Activated CD4-positive, alpha-beta T cell treated with anti-CD3 and anti-CD28 coated beads, Interleukin-2, amount 10 ng/mL, durations not matched to agents 24 days and 14 days (primary cell): ENCODE measurements at regions of chr6 and their contacts with region 1.

Region 1: DNA sequence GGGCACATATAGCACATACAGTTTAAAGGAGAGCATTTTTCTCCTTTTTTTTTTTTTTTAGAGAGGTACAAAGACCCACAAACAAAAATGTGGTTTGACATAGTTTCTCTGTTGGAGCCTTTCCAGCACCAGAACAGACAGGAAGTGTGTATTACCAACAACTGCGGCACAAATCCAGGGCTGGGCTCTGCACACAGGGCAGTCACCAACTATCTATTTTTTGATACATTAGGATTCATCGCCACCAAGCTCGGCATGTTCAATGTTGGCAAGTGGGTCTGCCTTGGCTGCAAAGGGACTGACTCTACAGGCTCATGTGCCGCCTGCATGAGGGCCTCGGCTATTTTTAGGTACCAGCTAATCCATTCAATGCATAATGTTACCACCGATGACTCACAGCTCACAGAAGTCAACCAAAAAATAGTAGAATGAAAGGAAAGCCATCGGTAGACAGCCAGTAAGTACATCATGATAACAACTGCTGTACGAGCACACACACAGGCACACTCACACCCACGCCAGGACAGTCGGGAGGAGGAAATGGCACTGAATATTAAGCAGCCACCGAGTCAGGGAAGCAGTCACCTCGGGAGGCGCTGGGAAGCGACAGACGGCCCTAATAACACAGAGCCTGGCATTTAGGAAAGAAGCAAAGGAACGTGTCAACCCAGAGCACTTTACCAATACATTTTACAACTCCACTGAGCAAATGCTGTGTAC is 81.6 kb downstream of the GMPR start:
- DNase-seq: peak; percentile 90
- H3K4me3 Mint-ChIP-seq: peak overlapping the region; percentile 73
- H3K27ac Mint-ChIP-seq: peak overlapping the region; percentile 84
- H3K4me1 Mint-ChIP-seq: peaks cover 66% of the 10 kb centered on the region
- H3K27me3 Mint-ChIP-seq: no peaks in the 10 kb centered on the region

Region 2: DNA sequence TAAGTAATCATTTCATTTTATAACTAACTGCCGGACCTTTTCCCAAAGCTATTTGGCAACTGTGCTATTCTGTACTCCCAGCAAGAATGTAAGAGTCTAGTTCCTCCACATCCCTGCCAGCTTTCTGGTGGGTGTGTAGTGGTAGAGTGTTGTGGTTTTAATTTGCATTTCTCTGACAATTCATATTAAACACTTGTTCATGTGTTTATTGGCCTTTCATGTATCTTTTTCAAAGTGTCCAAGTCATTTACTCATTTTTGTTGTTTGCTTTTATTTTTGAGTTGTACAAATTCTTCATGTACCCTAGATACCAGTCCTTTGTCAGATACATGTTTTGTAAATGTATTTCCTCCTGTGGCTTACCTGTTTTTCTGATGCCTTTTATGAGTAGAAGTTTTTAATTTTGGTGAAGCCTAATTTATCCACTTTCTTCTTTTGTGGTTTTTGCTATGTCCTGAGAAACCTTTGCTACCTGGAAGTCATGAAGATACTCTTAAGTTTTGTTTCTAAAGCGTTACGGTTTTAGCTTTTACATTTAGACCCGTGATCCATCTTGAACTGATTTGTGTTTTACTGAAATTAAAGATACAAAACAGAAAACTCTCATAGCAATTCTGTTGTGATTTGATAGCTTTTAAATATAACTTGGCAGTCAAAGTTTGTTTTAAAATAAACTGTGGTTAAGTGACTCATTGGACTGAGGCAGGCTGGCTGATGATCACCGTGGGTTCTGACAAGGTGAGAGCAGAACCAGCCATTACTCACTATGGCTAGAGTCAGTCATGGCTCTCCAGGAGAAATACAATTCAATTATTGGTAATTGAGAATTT is 183.1 kb before region 1 on chr6:
- intact Hi-C with region 1: loop called (anchors 5 kb)
- DNase-seq: peak; percentile 71
- H3K4me3 Mint-ChIP-seq: peak overlapping the region; percentile 71
- H3K27ac Mint-ChIP-seq: peak overlapping the region; percentile 93
- H3K4me1 Mint-ChIP-seq: peaks cover 60% of the 10 kb centered on the region
- H3K27me3 Mint-ChIP-seq: no peaks in the 10 kb centered on the region

Region 3: DNA sequence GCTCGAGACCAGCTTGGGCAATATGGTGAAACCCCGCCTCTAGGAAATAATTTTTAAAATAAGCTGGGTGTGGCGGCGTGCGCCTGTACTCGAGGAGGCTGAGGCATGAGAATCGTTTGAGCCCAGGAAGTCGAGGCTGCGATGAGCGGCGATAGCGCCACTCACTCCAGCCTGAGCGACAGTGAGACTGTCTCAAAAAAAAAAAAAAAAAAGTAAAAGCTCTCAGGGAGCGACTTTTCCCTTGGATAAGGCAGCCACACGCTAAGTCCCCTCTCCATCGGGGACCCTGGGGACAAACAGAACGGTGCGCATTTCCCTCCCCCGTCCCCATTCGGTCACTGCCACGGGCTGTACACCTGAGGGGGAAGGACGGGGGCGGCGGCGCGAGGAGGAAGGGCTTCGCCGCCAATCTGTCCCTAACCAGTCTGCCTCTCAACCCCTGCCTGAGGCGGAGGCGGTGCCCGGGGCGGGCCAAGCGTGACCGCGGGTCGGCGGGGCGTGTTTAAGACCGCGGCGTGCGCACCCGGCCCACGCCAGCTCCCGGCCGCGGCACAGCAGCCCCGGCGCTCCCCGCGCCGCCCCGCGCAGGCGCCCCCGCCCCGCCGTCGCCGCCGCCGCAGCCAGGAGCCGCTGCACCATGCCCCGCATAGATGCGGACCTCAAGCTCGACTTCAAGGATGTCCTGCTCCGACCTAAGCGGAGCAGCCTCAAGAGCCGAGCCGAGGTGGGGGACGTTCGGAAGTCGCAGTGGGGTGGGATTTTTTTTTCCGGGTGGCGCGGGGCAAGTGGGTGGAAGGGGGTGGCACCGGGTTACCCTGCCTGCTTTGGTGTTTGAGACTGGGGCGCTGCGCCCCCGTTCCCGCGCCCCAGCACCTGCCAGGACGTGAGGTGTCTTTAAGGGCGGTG is 81.7 kb before region 1 on chr6 and contains the start of gene GMPR:
- intact Hi-C with region 1: loop called (anchors 5 kb)
- DNase-seq: peak; percentile 95
- H3K4me3 Mint-ChIP-seq: peak within 1 kb of the TSS; percentile 80
- H3K27ac Mint-ChIP-seq: peak within 1 kb of the TSS; percentile 20
- H3K4me1 Mint-ChIP-seq: peaks cover 26% of the 10 kb centered on the region
- H3K27me3 Mint-ChIP-seq: peaks cover 39% of the 10 kb centered on the region
- total RNA-seq, gene GMPR: 1.0 and 2.1 TPM in 2 replicates

Region 4: DNA sequence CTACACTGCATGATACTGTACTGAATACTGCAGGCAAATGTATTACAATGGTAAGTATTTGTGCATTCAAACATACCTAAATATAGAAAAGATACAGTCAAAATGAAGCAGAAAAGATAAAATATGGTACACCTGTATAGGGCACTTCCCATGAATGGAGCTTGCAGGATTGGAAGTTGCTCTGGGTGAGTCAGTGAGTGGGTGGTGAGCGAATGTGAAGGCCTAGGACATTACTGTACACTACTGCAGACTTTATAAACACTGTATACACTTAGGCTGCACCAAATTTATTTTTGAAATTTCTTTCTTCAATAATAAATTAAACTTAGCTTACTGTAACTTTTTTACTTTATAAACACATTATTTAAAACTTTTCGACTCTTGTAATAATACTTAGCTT is 228.1 kb after region 1 on chr6:
- intact Hi-C with region 1: no loop called
- DNase-seq: no peak
- H3K4me3 Mint-ChIP-seq: no peak overlapping the region
- H3K27ac Mint-ChIP-seq: no peak overlapping the region
- H3K4me1 Mint-ChIP-seq: peaks cover 17% of the 10 kb centered on the region
- H3K27me3 Mint-ChIP-seq: no peaks in the 10 kb centered on the region

Region 5: DNA sequence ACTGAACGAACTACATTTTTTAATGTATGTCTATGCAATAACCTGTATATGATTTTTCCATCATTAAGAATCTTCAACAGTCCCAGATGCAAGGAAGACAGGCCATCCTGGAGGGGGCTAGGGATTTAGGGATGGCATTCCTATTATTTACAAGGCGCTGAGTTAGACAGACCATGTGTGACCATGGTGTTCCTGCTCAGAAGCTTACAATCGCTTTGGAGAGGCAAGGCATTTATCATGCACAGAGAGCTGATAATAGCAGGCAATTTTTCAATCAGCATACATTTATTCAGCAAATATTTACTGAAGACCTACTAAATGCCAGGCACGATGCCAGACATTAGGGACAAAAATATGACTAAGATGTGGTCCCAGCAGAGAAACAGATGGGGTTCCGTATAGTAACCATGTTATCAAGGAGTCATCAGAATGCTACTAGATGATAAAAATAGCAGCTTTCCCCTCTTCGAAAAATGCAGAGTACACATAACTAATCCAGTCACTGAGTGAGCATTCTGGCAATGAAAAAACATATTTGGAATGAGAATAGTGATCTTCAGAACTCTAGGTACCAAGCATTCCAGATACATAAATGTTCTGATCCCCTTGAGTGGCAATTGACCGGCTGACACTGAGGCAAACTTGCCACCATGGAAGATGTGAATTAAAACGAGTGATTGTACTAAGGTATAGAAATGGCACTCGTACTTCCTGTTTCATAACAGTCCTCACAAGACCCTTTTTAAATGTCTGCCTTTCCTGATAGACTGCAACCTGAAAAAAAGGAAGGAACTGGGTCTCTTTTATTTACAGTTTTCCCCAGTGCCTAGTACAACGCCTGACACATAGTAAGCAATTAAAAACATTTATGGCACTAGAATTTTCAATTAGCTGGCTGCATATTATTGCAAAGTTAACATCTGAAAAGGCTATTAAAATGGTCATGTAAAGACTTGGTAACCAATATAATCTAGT is 305.6 kb after region 1 on chr6:
- intact Hi-C with region 1: no loop called
- DNase-seq: no peak
- H3K4me3 Mint-ChIP-seq: no peak overlapping the region
- H3K27ac Mint-ChIP-seq: no peak overlapping the region
- H3K4me1 Mint-ChIP-seq: peaks cover 22% of the 10 kb centered on the region
- H3K27me3 Mint-ChIP-seq: no peaks in the 10 kb centered on the region

Region 6: DNA sequence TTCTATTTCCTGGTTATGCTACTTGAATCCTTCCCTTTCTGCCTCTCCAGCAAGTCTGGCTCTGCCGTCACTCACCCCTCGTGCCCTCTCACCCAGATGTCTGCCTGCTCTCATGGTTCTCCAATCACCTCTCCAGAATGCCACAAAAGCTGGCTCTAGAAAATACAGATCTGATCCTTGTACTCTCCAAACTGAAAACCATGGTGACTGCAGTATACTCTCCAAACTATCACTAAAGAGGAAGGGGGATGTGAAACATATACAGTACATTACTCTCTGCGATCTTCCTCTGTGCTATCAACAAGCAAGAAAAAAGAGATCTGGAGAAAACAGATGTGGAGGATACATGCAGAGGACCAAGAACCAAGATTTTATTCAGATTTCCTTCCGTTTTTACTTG is 350.2 kb after region 1 on chr6:
- intact Hi-C with region 1: loop called (anchors 5 kb)
- DNase-seq: no peak
- H3K4me3 Mint-ChIP-seq: peak overlapping the region; percentile 70
- H3K27ac Mint-ChIP-seq: peak overlapping the region; percentile 97
- H3K4me1 Mint-ChIP-seq: peaks cover 64% of the 10 kb centered on the region
- H3K27me3 Mint-ChIP-seq: no peaks in the 10 kb centered on the region

Region 7: GRCh38 chr6:16698997-16699868 is 379.3 kb after region 1 on chr6:
- intact Hi-C with region 1: loop called (anchors 5 kb)
- DNase-seq: peak; percentile 71
- H3K4me3 Mint-ChIP-seq: peak overlapping the region; percentile 71
- H3K27ac Mint-ChIP-seq: peak overlapping the region; percentile 95
- H3K4me1 Mint-ChIP-seq: peaks cover 68% of the 10 kb centered on the region
- H3K27me3 Mint-ChIP-seq: no peaks in the 10 kb centered on the region

Region 8: GRCh38 chr6:16956361-16956760 is 636.4 kb after region 1 on chr6:
- intact Hi-C with region 1: loop called (anchors 5 kb)
- DNase-seq: peak; percentile 63
- H3K4me3 Mint-ChIP-seq: peak overlapping the region; percentile 21
- H3K27ac Mint-ChIP-seq: peak overlapping the region; percentile 78
- H3K4me1 Mint-ChIP-seq: peaks cover 28% of the 10 kb centered on the region
- H3K27me3 Mint-ChIP-seq: peaks cover 21% of the 10 kb centered on the region